ENCODE measurements at regions of chr7 and their contacts with region 1.

Region 1: GRCh38 chr7:35801392-35802101 is 690 bp downstream of the SEPTIN7 start:
- DNase-seq: peak; percentile 63 to 94 (median 72)

Region 2: DNA sequence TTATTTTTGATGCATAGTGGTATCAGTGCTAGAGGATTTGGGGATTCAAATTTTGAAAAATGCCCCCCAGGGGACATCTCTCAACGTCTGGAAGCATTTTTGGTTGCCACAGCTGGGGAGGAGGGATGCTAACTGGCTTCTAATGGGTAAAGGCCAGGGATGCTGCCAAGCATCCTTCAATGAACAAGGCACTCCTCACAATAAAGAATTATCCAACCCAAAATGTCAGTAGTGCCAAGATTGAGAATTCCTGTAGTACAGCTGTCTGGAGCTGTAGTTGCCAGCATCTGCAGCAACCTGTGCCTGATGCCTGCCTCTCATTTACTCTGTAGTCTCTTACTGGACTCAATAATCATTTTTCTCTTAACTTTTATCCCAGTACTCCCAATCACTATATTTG is 52.8 kb after region 1 on chr7:
- intact Hi-C with region 1: loop called (anchors 5 kb)
- DNase-seq: peak in 2 of 10 donors; percentile 38 to 84

Region 3: DNA sequence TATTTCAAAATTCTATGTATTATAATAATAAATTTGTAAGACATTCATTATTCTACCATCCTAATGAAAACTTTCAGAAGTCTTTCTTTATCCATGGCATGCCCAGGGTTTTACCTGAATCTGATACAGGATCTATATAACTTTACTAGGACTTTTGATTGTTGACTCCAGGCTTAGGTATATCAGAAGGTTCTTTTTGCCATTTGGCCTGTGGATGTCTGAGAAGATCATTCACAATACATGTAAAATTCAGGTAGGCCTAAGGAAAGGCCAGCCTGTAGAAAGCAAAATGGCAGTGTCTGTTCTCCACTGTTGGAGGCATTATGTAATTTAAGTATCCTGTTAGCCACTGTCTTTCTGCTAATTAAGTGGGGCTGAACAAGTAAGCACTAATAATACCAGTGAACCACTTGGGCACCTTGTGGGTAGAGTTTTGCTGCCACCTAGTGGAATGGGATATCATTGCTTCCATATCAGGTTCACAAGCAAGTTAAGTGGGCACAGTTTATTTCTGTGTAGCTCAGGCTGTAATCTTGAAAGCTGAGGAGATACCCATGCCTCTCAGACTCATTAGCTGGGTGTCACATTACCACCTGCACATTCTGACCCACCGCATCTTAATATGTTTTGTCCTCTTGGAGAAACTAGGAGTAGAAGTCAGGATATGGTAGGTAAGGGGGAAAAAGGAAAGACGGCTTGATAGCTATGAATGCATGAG is 104.8 kb after region 1 on chr7:
- intact Hi-C with region 1: loop called (anchors 5 kb)
- DNase-seq: peak in 5 of 10 donors; percentile 51 to 90 (median 64)